Heart right ventricle (tissue), 16 donors: ENCODE measurements at regions of chr3 and their contacts with region 1.

Region 1: GRCh38 chr3:15805756-15806266 is 8.0 kb upstream of the ANKRD28 start:
- DNase-seq: no peak
- ATAC-seq: peak in 4 of 8 donors; percentile 21 to 63 (median 48)
- H3K4me3 ChIP-seq: no peak overlapping the region
- H3K27ac ChIP-seq: peak overlapping the region in 1 of 10 donors; percentile 69
- H3K4me1 ChIP-seq: peaks cover 0 to 46% (median 7%) of the 10 kb centered on the region in 9 donors
- H3K27me3 ChIP-seq: no peaks in the 10 kb centered on the region
- CTCF ChIP-seq: no peak

Region 2: DNA sequence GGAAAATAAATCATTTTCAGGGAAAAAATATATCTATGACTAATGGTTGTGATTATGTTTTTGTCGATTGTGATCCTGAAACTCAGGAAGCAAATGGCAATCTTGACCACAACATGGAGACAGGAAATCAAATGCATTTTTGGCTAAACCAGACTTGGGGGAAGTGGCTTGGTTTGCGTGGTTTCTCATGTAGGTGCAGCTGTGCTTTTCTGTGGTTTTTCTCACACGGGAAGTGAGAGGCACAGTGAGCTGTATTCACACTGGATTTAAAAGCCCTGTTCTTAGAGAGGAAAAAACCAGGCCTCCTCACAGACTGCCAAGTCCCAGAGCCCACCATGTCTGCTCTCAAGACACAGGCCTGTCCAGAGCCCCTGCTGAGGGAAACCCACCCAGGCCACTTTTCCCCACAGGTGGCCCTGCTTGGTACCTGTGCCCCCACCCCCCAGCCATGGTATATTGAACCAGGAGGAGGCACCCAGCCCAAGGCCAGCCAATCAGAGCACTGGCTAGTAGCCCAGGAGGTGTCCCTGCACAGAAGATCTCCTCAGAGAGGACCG is 158.1 kb before region 1 on chr3:
- intact Hi-C with region 1: loop called in 1 of 10 experiments (anchors 10 kb)
- DNase-seq: peak in 1 of 2 donors; percentile 32
- ATAC-seq: peak in 6 of 8 donors; percentile 29 to 72 (median 51)
- H3K4me3 ChIP-seq: no peak overlapping the region
- H3K27ac ChIP-seq: peak overlapping the region in 9 of 10 donors; percentile 29 to 89 (median 75)
- H3K4me1 ChIP-seq: peaks cover 6 to 35% (median 25%) of the 10 kb centered on the region in 9 donors
- H3K27me3 ChIP-seq: no peaks in the 10 kb centered on the region
- CTCF ChIP-seq: no peak

Region 3: DNA sequence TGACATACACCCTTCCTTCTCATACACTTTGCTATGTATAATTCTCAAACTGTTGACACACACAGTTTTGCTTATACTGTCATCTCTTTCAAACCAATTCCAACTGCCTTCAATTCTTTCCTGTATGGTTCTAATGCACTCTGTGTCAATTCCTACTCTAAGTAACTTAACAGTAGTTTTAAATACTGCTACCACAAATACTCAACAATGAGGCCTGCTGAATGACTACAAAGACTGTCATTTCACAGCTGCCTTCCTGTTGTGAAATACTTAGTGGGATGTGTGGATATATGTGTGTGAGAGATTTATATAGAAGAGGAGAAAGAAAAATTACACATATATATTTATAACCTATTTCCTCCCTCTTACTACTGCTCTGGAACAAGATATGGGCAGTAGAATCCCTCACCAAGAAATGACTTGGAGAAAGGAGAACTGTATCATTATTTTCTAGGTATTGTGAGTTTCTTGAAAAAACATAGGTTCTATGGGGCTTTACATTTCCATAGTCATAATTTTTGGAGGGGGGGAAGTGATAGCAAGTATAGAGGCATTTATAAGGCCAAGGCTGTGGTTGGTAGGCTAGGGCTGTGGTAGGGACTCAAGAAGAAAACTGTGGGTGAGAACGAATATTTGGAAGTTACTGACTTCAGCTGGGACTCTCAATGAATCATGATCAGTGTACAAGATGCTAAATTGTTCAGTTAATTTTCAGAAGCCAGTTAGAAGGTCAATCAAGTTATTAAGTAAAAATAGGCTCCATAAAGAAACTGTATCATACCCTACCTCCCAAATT is 96.7 kb before region 1 on chr3:
- intact Hi-C with region 1: loop called in 1 of 10 experiments (anchors 10 kb)
- DNase-seq: no peak
- ATAC-seq: no peak
- H3K4me3 ChIP-seq: no peak overlapping the region
- H3K27ac ChIP-seq: no peak overlapping the region
- H3K4me1 ChIP-seq: no peaks in the 10 kb centered on the region
- H3K27me3 ChIP-seq: no peaks in the 10 kb centered on the region
- CTCF ChIP-seq: no peak